ENCODE measurements at regions of chr21 and their contacts with region 1.

Region 1: DNA sequence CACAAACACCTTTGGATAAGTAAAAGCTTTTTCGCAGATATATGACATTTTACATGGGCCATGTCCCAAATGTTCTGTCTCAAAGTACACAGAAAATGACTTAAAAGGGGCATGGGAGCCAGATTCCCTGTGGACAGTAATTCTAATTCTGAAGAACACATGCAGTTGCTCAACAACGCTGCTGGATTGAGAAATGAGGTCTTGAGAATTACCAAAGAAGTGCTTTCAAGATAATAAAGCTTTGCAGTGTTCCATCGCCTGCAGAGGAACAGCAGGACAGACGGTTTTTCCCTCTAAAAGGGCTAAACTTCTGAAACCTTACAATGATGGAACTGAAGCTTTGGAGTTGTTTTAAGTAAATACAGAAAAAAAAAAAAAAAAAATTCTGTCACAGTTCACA is 55.3 kb upstream of the HSPA13 start:
- DNase-seq: no peak
- H3K4me3 ChIP-seq: no peak overlapping the region
- H3K27ac ChIP-seq: no peak overlapping the region
- H3K4me1 ChIP-seq: no peaks in the 10 kb centered on the region
- CTCF ChIP-seq: no peak

Region 2: GRCh38 chr21:13827201-13827600 is 611.0 kb before region 1 on chr21:
- CTCF ChIA-PET with region 1: no interaction called
- POLR2A ChIA-PET with region 1: no interaction called
- intact Hi-C with region 1: no loop called
- DNase-seq: no peak
- H3K4me3 ChIP-seq: no peak overlapping the region
- H3K27ac ChIP-seq: no peak overlapping the region
- H3K4me1 ChIP-seq: no peaks in the 10 kb centered on the region
- CTCF ChIP-seq: no peak

Region 3: GRCh38 chr21:14403681-14404318 is 34.4 kb before region 1 on chr21:
- CTCF ChIA-PET with region 1: no interaction called
- POLR2A ChIA-PET with region 1: no interaction called
- intact Hi-C with region 1: no loop called
- DNase-seq: peak; percentile 45
- H3K4me3 ChIP-seq: no peak overlapping the region
- H3K27ac ChIP-seq: no peak overlapping the region
- H3K4me1 ChIP-seq: no peaks in the 10 kb centered on the region
- CTCF ChIP-seq: peak; percentile 87

Region 4: GRCh38 chr21:15604424-15604823 is 1166.2 kb after region 1 on chr21:
- CTCF ChIA-PET with region 1: no interaction called
- POLR2A ChIA-PET with region 1: no interaction called
- intact Hi-C with region 1: loop called (anchors 10 kb)
- DNase-seq: no peak
- H3K4me3 ChIP-seq: no peak overlapping the region
- H3K27ac ChIP-seq: no peak overlapping the region
- H3K4me1 ChIP-seq: no peaks in the 10 kb centered on the region
- CTCF ChIP-seq: no peak